Activated T-helper 2 cell treated with anti-CD3 and anti-CD28 coated beads, Interferon-gamma antibody, Interleukin-2, Interleukin-4, amounts not matched to agents 10 μg/mL and 5 μg/mL and 100 μg/mL, durations not matched to agents 14 hours and 24 hours and 36 hours (primary cell): ENCODE measurements at regions of chr2 and their contacts with region 1.

Region 1: DNA sequence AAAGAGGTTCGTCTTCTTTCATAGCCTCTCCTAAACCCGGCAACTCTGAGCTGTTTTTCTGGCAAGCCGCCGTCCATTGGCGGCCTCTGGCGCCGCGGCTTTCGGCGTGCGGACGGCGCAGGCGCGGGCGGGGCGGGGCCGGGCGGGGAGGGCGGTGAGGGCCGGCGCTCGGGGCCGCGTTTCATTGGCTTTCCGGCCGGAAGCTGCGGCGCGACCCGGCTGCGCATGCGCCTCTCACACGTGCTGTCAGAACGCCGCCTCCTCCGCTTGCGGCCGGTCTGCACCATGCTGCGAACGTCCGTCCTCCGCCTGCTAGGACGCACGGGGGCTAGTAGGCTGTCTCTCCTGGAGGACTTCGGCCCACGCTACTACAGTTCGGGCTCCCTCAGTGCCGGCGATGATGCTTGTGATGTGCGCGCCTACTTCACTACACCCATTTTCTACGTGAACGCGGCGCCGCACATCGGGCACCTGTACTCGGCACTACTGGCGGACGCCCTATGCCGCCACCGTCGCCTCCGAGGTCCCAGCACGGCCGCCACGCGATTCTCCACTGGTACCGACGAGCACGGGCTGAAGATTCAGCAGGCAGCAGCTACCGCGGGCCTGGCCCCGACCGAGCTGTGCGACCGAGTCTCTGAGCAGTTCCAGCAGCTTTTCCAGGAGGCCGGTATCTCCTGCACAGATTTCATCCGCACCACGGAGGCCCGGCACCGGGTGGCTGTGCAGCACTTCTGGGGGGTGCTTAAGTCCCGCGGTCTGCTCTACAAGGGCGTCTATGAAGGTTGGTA is at the start of gene MARS2:
- DNase-seq: peak; percentile 90
- H3K4me3 Mint-ChIP-seq: peak within 1 kb of the TSS; percentile 92
- H3K27ac Mint-ChIP-seq: peak within 1 kb of the TSS; percentile 85
- H3K4me1 Mint-ChIP-seq: peaks cover 49% of the 10 kb centered on the region
- H3K27me3 Mint-ChIP-seq: no peaks in the 10 kb centered on the region
- total RNA-seq, gene MARS2: 16.8 and 17.2 TPM in 2 replicates

Region 2: GRCh38 chr2:196639180-196640030 is 1065.9 kb before region 1 on chr2 and contains the start of gene CCDC150:
- intact Hi-C with region 1: loop called (anchors 1 kb)
- DNase-seq: peak; percentile 93
- H3K4me3 Mint-ChIP-seq: peak within 1 kb of the TSS; percentile 90
- H3K27ac Mint-ChIP-seq: peak within 1 kb of the TSS; percentile 65
- H3K4me1 Mint-ChIP-seq: peaks cover 24% of the 10 kb centered on the region
- H3K27me3 Mint-ChIP-seq: peaks cover 11% of the 10 kb centered on the region
- total RNA-seq, gene CCDC150: 13.6 and 17.8 TPM in 2 replicates

Region 3: GRCh38 chr2:197499594-197500526 is 205.5 kb before region 1 on chr2 and contains the starts of genes HSPD1 and HSPE1:
- intact Hi-C with region 1: loop called (anchors 1 kb)
- DNase-seq: peak; percentile 99
- H3K4me3 Mint-ChIP-seq: peak within 1 kb of the TSS; percentile 94
- H3K27ac Mint-ChIP-seq: peak within 1 kb of the TSS; percentile 97
- H3K4me1 Mint-ChIP-seq: peaks cover 41% of the 10 kb centered on the region
- H3K27me3 Mint-ChIP-seq: no peaks in the 10 kb centered on the region
- total RNA-seq, gene HSPD1: 749 and 761 TPM in 2 replicates
- total RNA-seq, gene HSPE1: 301 and 309 TPM in 2 replicates

Region 4: GRCh38 chr2:197777823-197778407 is 72.6 kb after region 1 on chr2:
- intact Hi-C with region 1: loop called (anchors 1 kb)
- DNase-seq: no peak
- H3K4me3 Mint-ChIP-seq: no peak overlapping the region
- H3K27ac Mint-ChIP-seq: no peak overlapping the region
- H3K4me1 Mint-ChIP-seq: peaks cover 4% of the 10 kb centered on the region
- H3K27me3 Mint-ChIP-seq: peaks cover 17% of the 10 kb centered on the region

Region 5: DNA sequence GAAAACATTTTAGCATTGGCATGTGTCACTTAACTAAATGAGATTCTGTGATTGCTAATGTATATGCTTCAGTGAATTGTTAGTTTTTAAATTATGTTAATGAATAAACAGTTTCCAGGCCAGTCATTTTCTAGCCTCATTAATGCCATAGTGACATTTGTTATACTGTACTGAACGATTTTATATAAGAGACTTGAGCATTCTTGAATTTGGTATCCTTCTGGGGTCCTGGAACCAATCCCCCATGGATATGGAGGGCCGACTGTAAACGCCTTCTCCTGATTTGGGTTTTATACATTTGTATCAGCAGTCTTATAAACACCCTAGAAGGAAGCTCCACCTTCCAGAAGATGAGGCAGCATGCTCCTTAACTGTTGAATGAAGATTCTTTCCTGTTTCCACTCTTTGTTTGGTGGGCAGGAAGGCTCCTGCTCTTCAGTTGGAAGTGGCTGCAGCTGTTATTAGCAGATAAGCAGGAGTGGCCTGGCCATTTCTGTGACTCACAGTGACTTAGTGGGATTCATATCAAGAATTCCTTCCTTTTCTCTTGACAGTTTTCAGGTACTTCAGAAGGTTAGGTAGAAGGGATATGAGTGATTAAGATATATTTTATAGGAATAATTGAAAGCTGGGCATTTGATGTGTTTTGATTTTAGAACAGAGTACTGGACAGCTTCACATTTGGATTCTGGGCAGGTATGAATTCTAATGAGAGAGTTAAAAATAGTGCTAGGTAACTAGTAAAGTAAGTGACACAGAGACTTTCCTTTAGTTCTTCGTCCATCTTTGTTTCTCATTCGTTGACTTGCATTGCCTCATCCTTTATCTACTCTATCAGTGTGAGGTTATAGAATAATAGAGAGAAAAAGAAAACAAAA is 223.9 kb after region 1 on chr2:
- intact Hi-C with region 1: no loop called
- DNase-seq: no peak
- H3K4me3 Mint-ChIP-seq: no peak overlapping the region
- H3K27ac Mint-ChIP-seq: no peak overlapping the region
- H3K4me1 Mint-ChIP-seq: peaks cover 25% of the 10 kb centered on the region
- H3K27me3 Mint-ChIP-seq: peaks cover 3% of the 10 kb centered on the region

Region 6: GRCh38 chr2:198127627-198128026 is 422.3 kb after region 1 on chr2:
- intact Hi-C with region 1: loop called (anchors 10 kb)
- DNase-seq: peak; percentile 16
- H3K4me3 Mint-ChIP-seq: no peak overlapping the region
- H3K27ac Mint-ChIP-seq: no peak overlapping the region
- H3K4me1 Mint-ChIP-seq: no peaks in the 10 kb centered on the region
- H3K27me3 Mint-ChIP-seq: no peaks in the 10 kb centered on the region